Heart left ventricle (tissue), 16 donors: ENCODE measurements at regions of chr12 and their contacts with region 1.

Region 1: GRCh38 chr12:48119078-48119833 is at the start of gene PFKM:
- DNase-seq: peak; percentile 80 to 92 (median 88)
- ATAC-seq: peak; percentile 95 to 98 (median 97)
- H3K4me3 ChIP-seq: peak within 1 kb of the TSS; percentile 32 to 97 (median 68)
- H3K27ac ChIP-seq: peak within 1 kb of the TSS; percentile 20 to 95 (median 82)
- H3K4me1 ChIP-seq: peaks cover 0 to 31% (median 10%) of the 10 kb centered on the region in 12 donors
- H3K27me3 ChIP-seq: no peaks in the 10 kb centered on the region
- CTCF ChIP-seq: no peak
- POLR2A ChIP-seq: peak in 1 of 2 donors; percentile 56
- total RNA-seq, gene PFKM: 230 to 901 (median 521) TPM

Region 2: GRCh38 chr12:48084066-48084465 is 35.2 kb before region 1 on chr12:
- intact Hi-C with region 1: loop called in 1 of 10 experiments (anchors 2 kb)
- DNase-seq: no peak
- ATAC-seq: no peak
- H3K4me3 ChIP-seq: no peak overlapping the region
- H3K27ac ChIP-seq: no peak overlapping the region
- H3K4me1 ChIP-seq: no peaks in the 10 kb centered on the region
- H3K27me3 ChIP-seq: no peaks in the 10 kb centered on the region
- CTCF ChIP-seq: peak in 10 of 12 donors; percentile 16 to 54 (median 42)
- POLR2A ChIP-seq: no peak

Region 3: GRCh38 chr12:48105862-48106680 is 13.2 kb before region 1 on chr12 and contains the start of gene SENP1:
- intact Hi-C with region 1: loop called in 1 of 10 experiments (anchors 1 kb)
- DNase-seq: peak; percentile 91 to 94 (median 91)
- ATAC-seq: peak; percentile 91 to 98 (median 97)
- H3K4me3 ChIP-seq: peak within 1 kb of the TSS; percentile 64 to 98 (median 94)
- H3K27ac ChIP-seq: peak within 1 kb of the TSS; percentile 86 to 100 (median 96)
- H3K4me1 ChIP-seq: peaks cover 0 to 22% (median 16%) of the 10 kb centered on the region in 12 donors
- H3K27me3 ChIP-seq: no peaks in the 10 kb centered on the region
- CTCF ChIP-seq: peak in 7 of 12 donors; percentile 15 to 54 (median 41)
- POLR2A ChIP-seq: peak in 1 of 2 donors; percentile 17
- total RNA-seq, gene SENP1: 6.9 to 13.6 (median 9.2) TPM